Ascending aorta (tissue), 2 donors: ENCODE measurements at regions of chr1 and their contacts with region 1.

Region 1: GRCh38 chr1:61741711-61742619 is at the start of gene PATJ:
- DNase-seq: peak in 1 of 2 donors; percentile 70
- H3K4me3 ChIP-seq: peak within 1 kb of the TSS; percentile 79 to 94
- H3K27ac ChIP-seq: peak within 1 kb of the TSS; percentile 97 to 99
- H3K4me1 ChIP-seq: peaks cover 0 to 21% of the 10 kb centered on the region in 2 donors
- H3K27me3 ChIP-seq: no peaks in the 10 kb centered on the region
- CTCF ChIP-seq: no peak
- total RNA-seq, gene PATJ: 26.7 TPM

Region 2: DNA sequence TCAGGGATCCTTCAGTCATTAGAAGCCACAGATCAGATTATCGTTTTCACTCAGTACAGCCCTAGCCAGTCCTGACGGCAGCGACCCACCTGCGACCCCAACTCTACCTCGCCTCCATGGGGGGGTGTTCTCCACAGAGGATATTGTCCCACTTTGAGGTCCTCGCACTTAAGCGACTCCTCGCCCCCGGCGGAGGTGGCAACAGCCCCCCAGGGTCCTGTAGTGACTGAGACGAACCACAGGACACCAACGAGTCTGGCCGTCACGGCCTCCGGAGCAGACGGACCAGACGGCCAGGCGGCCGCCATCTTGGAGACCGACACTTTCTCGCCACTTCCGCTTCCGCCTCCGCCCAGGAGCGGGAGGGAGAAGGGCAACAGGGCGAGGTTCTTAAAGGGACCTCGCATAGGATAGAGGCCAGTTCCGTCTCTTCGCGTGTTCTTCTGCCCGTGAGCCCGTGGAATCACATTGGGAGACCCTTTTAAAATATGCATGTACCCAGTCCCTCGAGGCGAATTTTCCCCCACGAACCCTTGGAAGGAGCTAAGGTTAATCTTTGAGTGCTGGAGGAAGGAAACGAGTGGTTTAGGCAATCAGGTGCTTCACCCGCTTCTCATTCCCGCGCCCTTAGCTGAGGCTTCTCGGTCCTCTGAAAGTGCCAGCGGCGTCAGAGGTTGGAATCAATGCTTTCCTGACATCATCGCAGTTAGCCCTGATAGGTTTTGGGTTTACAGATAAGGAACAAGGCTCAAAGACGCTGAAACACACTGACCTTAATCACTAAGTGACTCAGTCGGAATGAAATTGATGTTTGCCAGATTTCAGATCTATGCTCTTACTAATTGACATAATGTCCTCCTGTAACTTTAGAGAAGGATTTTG is 16.9 kb before region 1 on chr1 and contains the start of gene TM2D1:
- intact Hi-C with region 1: loop called (anchors 1 kb)
- DNase-seq: peak; percentile 55 to 95
- H3K4me3 ChIP-seq: peak within 1 kb of the TSS; percentile 79 to 81
- H3K27ac ChIP-seq: peak within 1 kb of the TSS; percentile 89 to 96
- H3K4me1 ChIP-seq: peaks cover 6 to 12% of the 10 kb centered on the region in 2 donors
- H3K27me3 ChIP-seq: no peaks in the 10 kb centered on the region
- CTCF ChIP-seq: peak in 1 of 3 experiments; percentile 4
- total RNA-seq, gene TM2D1: 43.2 TPM

Region 3: DNA sequence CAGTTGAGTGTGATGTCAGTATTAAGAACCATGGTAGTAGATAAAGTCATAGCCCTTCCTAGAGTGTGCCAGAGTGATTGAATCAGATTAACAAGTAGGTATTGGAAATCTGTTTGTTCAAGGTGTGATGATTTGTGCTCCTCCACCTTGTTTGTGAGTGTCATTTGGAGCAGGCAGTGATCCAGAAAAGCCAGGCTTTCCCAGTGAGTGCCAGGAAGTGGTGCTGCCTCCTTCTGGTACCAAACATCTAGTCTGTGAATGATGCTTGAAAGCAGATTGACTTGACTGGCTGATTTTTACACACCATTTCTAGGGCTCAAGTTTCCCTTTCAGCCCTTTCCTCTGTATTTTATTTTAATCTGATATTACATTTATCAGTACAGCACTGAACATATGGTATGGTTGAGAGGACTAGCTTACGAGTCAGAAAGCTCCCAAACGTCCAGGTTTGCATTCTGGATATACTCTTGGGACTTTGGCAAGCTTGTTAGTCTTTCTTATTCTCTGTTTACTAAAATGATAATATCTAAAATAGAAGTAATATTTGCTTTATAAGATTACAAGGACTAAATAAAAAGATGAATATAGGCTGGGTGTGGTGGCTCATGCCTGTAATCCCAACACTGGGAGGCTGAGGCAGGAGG is 101.0 kb after region 1 on chr1:
- intact Hi-C with region 1: loop called (anchors 5 kb)
- DNase-seq: no peak
- H3K4me3 ChIP-seq: no peak overlapping the region
- H3K27ac ChIP-seq: peak overlapping the region; percentile 56 to 77
- H3K4me1 ChIP-seq: peaks cover 8 to 46% of the 10 kb centered on the region in 2 donors
- H3K27me3 ChIP-seq: no peaks in the 10 kb centered on the region
- CTCF ChIP-seq: peak in 1 of 3 experiments; percentile 20